Heart left ventricle (tissue), 16 donors: ENCODE measurements at regions of chrX and their contacts with region 1.

Region 1: DNA sequence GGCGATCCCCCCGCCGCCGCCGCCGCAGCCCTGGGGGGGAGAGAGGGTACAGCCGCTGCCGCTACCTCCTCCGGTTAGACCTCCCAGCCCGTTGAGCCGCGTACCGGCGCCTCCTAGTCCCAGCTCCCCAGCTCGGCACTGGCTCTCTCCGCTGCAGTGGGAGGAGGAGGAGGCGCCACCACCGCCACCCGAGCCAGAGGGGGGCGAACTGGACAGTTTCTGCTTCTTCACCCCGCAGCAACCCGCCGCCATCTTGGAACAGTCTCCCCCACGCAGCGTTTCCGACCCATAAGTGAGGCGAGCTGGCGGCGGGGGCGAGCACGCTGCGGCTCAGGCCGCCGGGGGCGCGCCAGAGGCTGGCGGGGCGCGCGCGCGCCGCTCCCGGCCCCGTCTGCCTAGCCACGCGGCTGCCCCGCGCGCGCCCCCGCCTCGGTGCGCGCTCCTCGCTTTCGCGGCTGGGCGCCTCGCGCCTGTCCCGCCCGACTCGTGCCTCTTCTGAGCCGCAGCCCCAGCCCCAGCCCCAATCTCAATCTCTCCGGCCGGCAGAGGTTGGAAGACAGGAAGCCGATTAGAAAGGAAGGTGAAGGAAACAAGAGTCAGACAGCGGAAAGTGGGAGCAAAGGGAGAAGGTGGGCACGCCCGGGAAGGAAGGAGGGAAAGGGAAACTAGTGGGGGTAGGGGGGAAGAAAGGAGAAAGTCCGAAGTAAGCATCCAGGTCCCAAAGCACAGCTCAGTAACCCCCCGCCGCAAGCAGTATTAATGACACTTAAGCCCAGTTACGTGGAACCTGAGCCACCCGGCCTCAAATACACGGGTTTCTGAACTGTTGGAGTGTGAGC is at the start of gene AMMECR1:
- DNase-seq: peak; percentile 72 to 86 (median 79)
- ATAC-seq: peak; percentile 91 to 97 (median 96)
- H3K4me3 ChIP-seq: peak within 1 kb of the TSS; percentile 47 to 97 (median 80)
- H3K27ac ChIP-seq: peak within 1 kb of the TSS; percentile 65 to 86 (median 80)
- H3K4me1 ChIP-seq: peaks cover 0 to 14% (median 3%) of the 10 kb centered on the region in 12 donors
- H3K27me3 ChIP-seq: peaks cover 0 to 26% (median 0%) of the 10 kb centered on the region in 9 donors
- CTCF ChIP-seq: peak in 1 of 12 donors; percentile 5
- POLR2A ChIP-seq: peak in 1 of 2 donors; percentile 34
- total RNA-seq, gene AMMECR1: 0.56 to 4.1 (median 1.2) TPM

Region 2: GRCh38 chrX:110167952-110168451 is 150.0 kb before region 1 on chrX:
- intact Hi-C with region 1: loop called in 6 of 10 experiments (anchors 5 to 10 kb)
- DNase-seq: no peak
- ATAC-seq: peak; percentile 24 to 50 (median 34)
- H3K4me3 ChIP-seq: no peak overlapping the region
- H3K27ac ChIP-seq: no peak overlapping the region
- H3K4me1 ChIP-seq: peaks cover 0 to 9% (median 0%) of the 10 kb centered on the region in 12 donors
- H3K27me3 ChIP-seq: no peaks in the 10 kb centered on the region
- CTCF ChIP-seq: peak; percentile 29 to 63 (median 47)
- POLR2A ChIP-seq: no peak

Region 3: GRCh38 chrX:110178179-110178865 is 139.7 kb before region 1 on chrX:
- intact Hi-C with region 1: loop called in 3 of 10 experiments (anchors 5 to 10 kb)
- DNase-seq: no peak
- ATAC-seq: no peak
- H3K4me3 ChIP-seq: no peak overlapping the region
- H3K27ac ChIP-seq: no peak overlapping the region
- H3K4me1 ChIP-seq: peaks cover 0 to 32% (median 5%) of the 10 kb centered on the region in 12 donors
- H3K27me3 ChIP-seq: peaks cover 0 to 3% (median 0%) of the 10 kb centered on the region in 9 donors
- CTCF ChIP-seq: no peak
- POLR2A ChIP-seq: no peak

Region 4: DNA sequence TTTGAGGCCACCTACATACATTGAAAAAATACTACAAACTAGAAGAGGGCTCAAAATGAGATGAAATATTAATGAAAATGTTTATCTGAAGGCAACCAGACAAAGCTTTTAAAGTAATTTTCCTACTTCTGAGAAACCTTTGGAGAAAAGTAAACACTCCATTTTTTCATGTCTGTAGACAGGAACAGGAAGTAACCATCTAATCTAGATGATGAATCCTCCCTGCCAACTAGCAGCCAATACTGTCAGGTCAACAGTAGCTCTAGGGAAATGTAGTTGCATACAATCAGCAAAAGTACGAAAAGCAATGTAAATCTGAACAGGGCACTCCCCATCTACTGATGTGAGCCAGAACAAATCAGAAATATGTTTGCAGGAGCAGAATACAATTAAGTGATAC is 49.2 kb before region 1 on chrX:
- intact Hi-C with region 1: loop called in 1 of 10 experiments (anchors 10 kb)
- DNase-seq: no peak
- ATAC-seq: no peak
- H3K4me3 ChIP-seq: no peak overlapping the region
- H3K27ac ChIP-seq: peak overlapping the region in 1 of 12 donors; percentile 21
- H3K4me1 ChIP-seq: peaks cover 0 to 18% (median 2%) of the 10 kb centered on the region in 12 donors
- H3K27me3 ChIP-seq: peaks cover 0 to 6% (median 0%) of the 10 kb centered on the region in 9 donors
- CTCF ChIP-seq: no peak
- POLR2A ChIP-seq: no peak

Region 5: GRCh38 chrX:110359273-110359672 is 41.2 kb after region 1 on chrX:
- intact Hi-C with region 1: no loop called
- DNase-seq: no peak
- ATAC-seq: no peak
- H3K4me3 ChIP-seq: no peak overlapping the region
- H3K27ac ChIP-seq: no peak overlapping the region
- H3K4me1 ChIP-seq: no peaks in the 10 kb centered on the region
- H3K27me3 ChIP-seq: peaks cover 0 to 25% (median 0%) of the 10 kb centered on the region in 9 donors
- CTCF ChIP-seq: no peak
- POLR2A ChIP-seq: no peak